Activated CD8-positive, alpha-beta T cell treated with anti-CD3 and anti-CD28 coated beads for 36 hours (primary cell): ENCODE measurements at regions of chr3 and their contacts with region 1.

Region 1: DNA sequence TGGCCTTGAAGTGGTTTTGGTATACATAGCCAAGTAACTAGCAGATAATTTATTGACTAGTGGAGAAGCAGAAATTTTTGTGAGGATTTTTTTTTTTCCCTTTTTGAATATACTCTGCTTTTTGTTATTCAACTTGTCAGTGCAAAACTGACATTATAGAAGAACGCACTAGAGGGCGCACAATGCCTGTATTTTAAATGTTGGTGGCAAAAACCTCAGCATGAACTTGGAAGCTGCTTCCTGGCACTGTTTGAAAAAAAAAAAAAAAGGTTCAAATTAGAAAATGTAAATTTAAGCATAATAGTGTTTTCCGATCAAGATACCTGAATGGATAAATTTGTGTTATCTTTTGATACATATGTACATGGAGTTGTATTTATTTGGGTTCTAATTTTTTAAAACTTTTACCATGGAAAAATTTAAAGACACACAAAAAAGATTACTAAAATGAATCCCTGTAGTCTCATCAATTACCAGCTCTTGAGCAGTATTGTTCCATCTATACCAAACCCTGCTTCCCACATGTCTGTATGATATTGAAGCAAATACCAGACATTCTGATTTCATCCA is 56.0 kb downstream of the SLC25A26 start:
- DNase-seq: peak; percentile 76
- ATAC-seq: no peak
- H3K4me3 Mint-ChIP-seq: no peak overlapping the region
- H3K27ac Mint-ChIP-seq: no peak overlapping the region
- H3K4me1 Mint-ChIP-seq: peaks cover 26% of the 10 kb centered on the region
- H3K27me3 Mint-ChIP-seq: no peaks in the 10 kb centered on the region
- CTCF ChIP-seq: peak; percentile 78

Region 2: GRCh38 chr3:66372681-66373350 is 96.0 kb after region 1 on chr3:
- CTCF ChIA-PET with region 1: interaction called, 18 read pairs
- POLR2A ChIA-PET with region 1: no interaction called
- intact Hi-C with region 1: loop called (anchors 5 kb)
- DNase-seq: peak; percentile 37
- ATAC-seq: peak; percentile 62
- H3K4me3 Mint-ChIP-seq: no peak overlapping the region
- H3K27ac Mint-ChIP-seq: peak overlapping the region; percentile 50
- H3K4me1 Mint-ChIP-seq: peaks cover 5% of the 10 kb centered on the region
- H3K27me3 Mint-ChIP-seq: no peaks in the 10 kb centered on the region
- CTCF ChIP-seq: no peak

Region 3: GRCh38 chr3:66378256-66378823 is 101.5 kb after region 1 on chr3:
- CTCF ChIA-PET with region 1: interaction called, 18 read pairs
- POLR2A ChIA-PET with region 1: no interaction called
- intact Hi-C with region 1: loop called (anchors 5 kb)
- DNase-seq: peak; percentile 60
- ATAC-seq: peak; percentile 68
- H3K4me3 Mint-ChIP-seq: no peak overlapping the region
- H3K27ac Mint-ChIP-seq: peak overlapping the region; percentile 82
- H3K4me1 Mint-ChIP-seq: peaks cover 13% of the 10 kb centered on the region
- H3K27me3 Mint-ChIP-seq: no peaks in the 10 kb centered on the region
- CTCF ChIP-seq: peak; percentile 46

Region 4: GRCh38 chr3:66394019-66394752 is 117.4 kb after region 1 on chr3:
- CTCF ChIA-PET with region 1: interaction called, 5 read pairs
- POLR2A ChIA-PET with region 1: no interaction called
- intact Hi-C with region 1: loop called (anchors 5 kb)
- DNase-seq: peak; percentile 76
- ATAC-seq: peak; percentile 98
- H3K4me3 Mint-ChIP-seq: peak overlapping the region; percentile 59
- H3K27ac Mint-ChIP-seq: peak overlapping the region; percentile 83
- H3K4me1 Mint-ChIP-seq: peaks cover 45% of the 10 kb centered on the region
- H3K27me3 Mint-ChIP-seq: no peaks in the 10 kb centered on the region
- CTCF ChIP-seq: no peak

Region 5: GRCh38 chr3:66822186-66823008 is 545.6 kb after region 1 on chr3:
- CTCF ChIA-PET with region 1: interaction called, 18 read pairs
- POLR2A ChIA-PET with region 1: no interaction called
- intact Hi-C with region 1: loop called (anchors 2 kb)
- DNase-seq: peak; percentile 73
- ATAC-seq: peak; percentile 77
- H3K4me3 Mint-ChIP-seq: no peak overlapping the region
- H3K27ac Mint-ChIP-seq: no peak overlapping the region
- H3K4me1 Mint-ChIP-seq: no peaks in the 10 kb centered on the region
- H3K27me3 Mint-ChIP-seq: no peaks in the 10 kb centered on the region
- CTCF ChIP-seq: peak; percentile 68